Left ventricle myocardium superior (tissue), 1 donor: ENCODE measurements at regions of chr1 and their contacts with region 1.

Region 1: GRCh38 chr1:220680085-220680687 is 10.0 kb upstream of the C1orf115 start:
- DNase-seq: no peak
- ATAC-seq: peak; percentile 66

Region 2: DNA sequence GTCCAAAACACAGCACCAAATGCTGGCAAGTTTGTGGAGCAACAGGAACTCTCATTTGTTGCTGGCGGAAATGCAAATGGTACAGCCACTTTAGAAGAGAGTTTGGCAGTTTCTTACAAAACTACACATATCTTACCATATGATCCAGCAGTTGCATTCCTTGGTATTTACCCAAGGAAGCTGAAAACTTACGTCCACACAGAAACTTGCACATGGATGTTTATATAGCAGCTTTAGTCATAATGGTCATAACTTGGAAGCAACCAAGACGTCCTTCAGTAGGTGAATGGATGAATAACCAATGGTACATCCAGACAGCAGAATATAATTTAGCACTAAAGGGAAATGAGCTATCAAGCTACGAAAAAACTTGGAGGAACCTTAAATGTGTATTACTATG is 85.8 kb before region 1 on chr1:
- intact Hi-C with region 1: no loop called
- DNase-seq: no peak
- ATAC-seq: no peak

Region 3: GRCh38 chr1:220726634-220727033 is 46.4 kb after region 1 on chr1:
- intact Hi-C with region 1: loop called (anchors 5 kb)
- DNase-seq: no peak
- ATAC-seq: no peak

Region 4: GRCh38 chr1:220776720-220777326 is 96.6 kb after region 1 on chr1:
- intact Hi-C with region 1: loop called (anchors 2 kb)
- DNase-seq: peak; percentile 91
- ATAC-seq: peak; percentile 95